Lower leg skin (tissue), 4 donors: ENCODE measurements at regions of chr5 and their contacts with region 1.

Region 1: GRCh38 chr5:61408476-61409168 is 76.6 kb downstream of the ZSWIM6 start:
- DNase-seq: peak; percentile 99 to 100
- H3K4me3 ChIP-seq: no peak overlapping the region
- CTCF ChIP-seq: peak in 1 of 3 donors; percentile 17
- POLR2A ChIP-seq: no peak

Region 2: GRCh38 chr5:61331407-61332357 is 76.9 kb before region 1 on chr5 and contains the start of gene ZSWIM6:
- intact Hi-C with region 1: loop called (anchors 10 kb)
- DNase-seq: peak; percentile 99 to 100
- H3K4me3 ChIP-seq: peak within 1 kb of the TSS; percentile 85
- CTCF ChIP-seq: no peak
- POLR2A ChIP-seq: peak in 1 of 2 donors; percentile 83
- total RNA-seq, gene ZSWIM6: 7.1 to 8.7 (median 8.1) TPM